ENCODE measurements at regions of chr1 and their contacts with region 1.

Region 1: DNA sequence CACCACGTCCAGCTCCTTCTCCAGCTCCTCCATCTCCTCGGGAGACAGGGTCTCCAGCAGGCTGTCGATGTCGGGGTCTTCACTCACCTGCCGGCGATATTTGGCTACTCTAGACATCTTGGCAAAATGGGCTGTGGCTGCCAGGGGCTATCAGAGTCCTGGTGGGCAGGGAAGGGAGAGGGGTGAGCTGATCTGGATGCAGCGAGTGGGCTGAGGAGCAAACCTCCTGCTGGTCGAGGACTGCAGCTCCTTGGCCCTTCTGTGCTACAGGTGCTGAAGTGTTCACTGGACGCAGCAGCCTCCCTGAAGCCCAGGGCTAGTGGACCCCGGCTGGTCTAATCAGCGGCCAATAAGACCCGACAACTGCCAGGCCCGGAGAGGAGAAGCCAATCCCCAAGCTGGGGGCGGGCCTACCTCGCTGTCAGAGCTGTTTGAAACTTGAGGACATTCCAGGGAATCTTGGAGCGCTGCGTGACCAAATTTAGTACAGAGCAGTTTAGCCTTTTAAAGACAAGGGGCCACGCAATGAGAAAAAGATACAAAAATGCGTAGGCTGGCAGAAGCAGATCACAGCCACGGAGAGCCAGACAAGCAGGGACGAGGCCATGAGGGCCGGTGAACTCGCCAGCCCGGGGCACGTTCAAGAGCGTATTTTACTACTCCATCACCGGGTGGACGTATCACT is at the start of gene LMOD1:
- DNase-seq: peak; percentile 57
- H3K4me3 ChIP-seq: peak within 1 kb of the TSS in 2 of 3 experiments; percentile 5 to 34
- H3K27ac ChIP-seq: no peak within 1 kb of the TSS
- H3K4me1 ChIP-seq: peaks cover 15% of the 10 kb centered on the region
- H3K27me3 ChIP-seq: no peaks in the 10 kb centered on the region
- CTCF ChIP-seq: no peak
- total RNA-seq, gene LMOD1: 29.5 TPM in 1 of 2 donors, not detected in the other

Region 2: DNA sequence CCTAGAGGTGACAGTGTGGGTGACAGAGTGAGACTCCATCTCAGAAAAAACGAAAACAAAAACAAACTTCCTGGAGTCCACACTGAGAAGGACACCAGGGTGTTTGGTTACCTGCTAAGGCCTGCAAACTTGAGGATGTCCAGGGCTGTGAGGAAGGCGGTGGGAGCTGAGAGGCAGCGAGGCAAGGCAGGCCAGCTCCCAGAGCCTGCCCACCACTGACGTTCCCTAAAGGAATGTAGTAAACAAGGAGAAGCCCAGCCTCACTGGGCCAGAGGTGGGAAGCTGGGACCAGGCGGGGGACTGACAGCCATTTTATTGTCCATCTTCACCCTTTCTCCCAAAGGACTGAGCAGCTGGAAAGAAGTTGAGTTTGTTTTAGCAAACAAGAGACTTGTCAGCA is 33.5 kb before region 1 on chr1:
- CTCF ChIA-PET with region 1: no interaction called
- dilution Hi-C with region 1: loop called (anchors 5 kb)
- in situ Hi-C with region 1: no loop called
- intact Hi-C with region 1: no loop called
- DNase-seq: no peak
- H3K4me3 ChIP-seq: no peak overlapping the region
- H3K27ac ChIP-seq: no peak overlapping the region
- H3K4me1 ChIP-seq: peaks cover 14% of the 10 kb centered on the region
- H3K27me3 ChIP-seq: no peaks in the 10 kb centered on the region
- CTCF ChIP-seq: no peak

Region 3: GRCh38 chr1:201925981-201926645 is 20.3 kb before region 1 on chr1:
- CTCF ChIA-PET with region 1: no interaction called
- dilution Hi-C with region 1: no loop called
- in situ Hi-C with region 1: no loop called
- intact Hi-C with region 1: no loop called
- DNase-seq: no peak
- H3K4me3 ChIP-seq: no peak overlapping the region
- H3K27ac ChIP-seq: no peak overlapping the region
- H3K4me1 ChIP-seq: no peaks in the 10 kb centered on the region
- H3K27me3 ChIP-seq: peaks cover 2% of the 10 kb centered on the region
- CTCF ChIP-seq: no peak

Region 4: GRCh38 chr1:202164271-202165037 is 218.1 kb after region 1 on chr1:
- CTCF ChIA-PET with region 1: no interaction called
- dilution Hi-C with region 1: no loop called
- in situ Hi-C with region 1: no loop called
- intact Hi-C with region 1: no loop called
- DNase-seq: no peak
- H3K4me3 ChIP-seq: no peak overlapping the region
- H3K27ac ChIP-seq: no peak overlapping the region
- H3K4me1 ChIP-seq: peaks cover 7% of the 10 kb centered on the region
- H3K27me3 ChIP-seq: no peaks in the 10 kb centered on the region
- CTCF ChIP-seq: no peak

Region 5: DNA sequence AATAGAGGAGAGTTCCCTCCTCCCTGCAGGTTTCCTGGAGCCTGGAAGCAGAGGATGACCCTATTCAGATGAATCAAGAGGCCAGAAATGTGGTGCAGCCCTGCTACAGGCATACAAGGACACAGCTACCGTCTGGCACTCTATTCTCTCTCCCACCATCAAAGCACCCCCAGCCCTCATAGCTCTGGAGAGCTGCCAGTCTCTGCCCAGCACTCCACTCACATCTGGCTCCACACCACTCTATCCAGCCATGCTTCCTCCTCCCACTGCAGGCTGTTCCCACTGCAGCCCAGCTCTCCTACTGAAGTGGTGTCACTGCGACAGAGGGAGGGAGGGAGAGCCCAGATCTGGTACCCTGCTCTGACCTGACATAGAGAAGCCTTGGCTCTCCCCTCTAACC is 745.5 kb after region 1 on chr1:
- CTCF ChIA-PET with region 1: interaction called, 13 read pairs
- dilution Hi-C with region 1: no loop called
- in situ Hi-C with region 1: no loop called
- intact Hi-C with region 1: no loop called
- DNase-seq: no peak
- H3K4me3 ChIP-seq: no peak overlapping the region
- H3K27ac ChIP-seq: no peak overlapping the region
- H3K4me1 ChIP-seq: no peaks in the 10 kb centered on the region
- H3K27me3 ChIP-seq: no peaks in the 10 kb centered on the region
- CTCF ChIP-seq: no peak

Region 6: GRCh38 chr1:202708456-202709275 is 762.3 kb after region 1 on chr1:
- CTCF ChIA-PET with region 1: no interaction called
- dilution Hi-C with region 1: no loop called
- in situ Hi-C with region 1: no loop called
- intact Hi-C with region 1: no loop called
- DNase-seq: no peak
- H3K4me3 ChIP-seq: no peak overlapping the region
- H3K27ac ChIP-seq: no peak overlapping the region
- H3K4me1 ChIP-seq: peaks cover 5% of the 10 kb centered on the region
- H3K27me3 ChIP-seq: peaks cover 29% of the 10 kb centered on the region
- CTCF ChIP-seq: no peak

Measured in mammary epithelial cell (primary cell).